Ovary (tissue), 10 donors: ENCODE measurements at regions of chr15 and their contacts with region 1.

Region 1: GRCh38 chr15:34358367-34358766 is 8.6 kb downstream of the LPCAT4 start:
- DNase-seq: no peak
- H3K4me3 ChIP-seq: no peak overlapping the region
- H3K27ac ChIP-seq: no peak overlapping the region
- H3K4me1 ChIP-seq: no peaks in the 10 kb centered on the region
- H3K27me3 ChIP-seq: no peaks in the 10 kb centered on the region
- CTCF ChIP-seq: no peak
- EP300 ChIP-seq: no peak
- POLR2A ChIP-seq: no peak

Region 2: GRCh38 chr15:34259566-34259965 is 98.8 kb before region 1 on chr15:
- intact Hi-C with region 1: loop called in 1 of 4 experiments (anchors 10 kb)
- DNase-seq: no peak
- H3K4me3 ChIP-seq: no peak overlapping the region
- H3K27ac ChIP-seq: no peak overlapping the region
- H3K4me1 ChIP-seq: no peaks in the 10 kb centered on the region
- H3K27me3 ChIP-seq: no peaks in the 10 kb centered on the region
- CTCF ChIP-seq: no peak
- EP300 ChIP-seq: no peak
- POLR2A ChIP-seq: no peak